ENCODE measurements at regions of chr7 and their contacts with region 1.

Region 1: GRCh38 chr7:51315393-51316261 is 982 bp downstream of the COBL start:
- DNase-seq: peak in 1 of 7 donors; percentile 49
- H3K4me3 ChIP-seq: peak overlapping the region in 2 of 4 donors; percentile 7 to 48
- H3K27ac ChIP-seq: no peak overlapping the region
- H3K4me1 ChIP-seq: peaks cover 9 to 11% of the 10 kb centered on the region in 2 donors
- H3K27me3 ChIP-seq: peaks cover 14% of the 10 kb centered on the region
- CTCF ChIP-seq: no peak
- POLR2A ChIP-seq: no peak

Region 2: GRCh38 chr7:51968461-51968860 is 652.8 kb after region 1 on chr7:
- intact Hi-C with region 1: loop called in 1 of 2 experiments (anchors 10 kb)
- DNase-seq: no peak
- H3K4me3 ChIP-seq: no peak overlapping the region
- H3K27ac ChIP-seq: no peak overlapping the region
- H3K4me1 ChIP-seq: no peaks in the 10 kb centered on the region
- H3K27me3 ChIP-seq: no peaks in the 10 kb centered on the region
- CTCF ChIP-seq: no peak
- POLR2A ChIP-seq: no peak

Measured in adrenal gland (tissue), 19 donors.